Right ventricle myocardium inferior (tissue), 1 donor: ENCODE measurements at regions of chr14 and their contacts with region 1.

Region 1: GRCh38 chr14:71789005-71789404 is 143.2 kb upstream of the RGS6 start:
- DNase-seq: no peak
- ATAC-seq: no peak

Region 2: DNA sequence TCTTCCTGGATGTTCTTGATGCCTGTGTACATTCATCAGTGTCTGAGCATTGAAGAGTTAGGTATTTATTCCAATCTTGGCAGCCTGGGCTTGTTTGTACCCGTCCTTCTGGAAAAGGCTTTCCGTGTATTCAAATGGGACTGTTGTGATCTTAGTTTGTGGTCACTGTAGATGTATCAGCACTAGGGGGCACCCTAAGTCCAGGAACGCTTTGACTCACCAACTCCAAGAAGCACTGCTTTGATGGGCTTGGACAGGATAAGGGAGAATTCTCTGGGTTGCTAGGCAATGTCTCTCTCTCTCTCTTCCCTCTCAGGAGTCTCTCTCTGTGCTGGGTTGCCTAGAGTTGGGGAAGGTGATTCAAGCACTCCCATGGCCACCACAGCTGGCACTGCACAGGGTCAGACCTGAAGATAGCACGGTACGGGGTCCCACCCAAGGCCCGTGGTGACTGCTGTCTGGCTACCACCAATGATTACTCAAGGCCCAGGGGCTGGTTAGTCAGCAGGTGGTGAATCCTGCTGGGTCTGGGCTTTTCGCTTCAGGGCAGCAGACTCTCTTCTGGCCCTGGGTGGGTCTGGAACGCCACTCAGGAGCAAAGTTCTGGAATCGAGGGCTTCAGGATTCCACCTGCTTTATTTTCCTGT is 67.9 kb before region 1 on chr14:
- intact Hi-C with region 1: loop called (anchors 2 kb)
- DNase-seq: no peak
- ATAC-seq: no peak